ENCODE measurements at regions of chr7 and their contacts with region 1.

Region 1: DNA sequence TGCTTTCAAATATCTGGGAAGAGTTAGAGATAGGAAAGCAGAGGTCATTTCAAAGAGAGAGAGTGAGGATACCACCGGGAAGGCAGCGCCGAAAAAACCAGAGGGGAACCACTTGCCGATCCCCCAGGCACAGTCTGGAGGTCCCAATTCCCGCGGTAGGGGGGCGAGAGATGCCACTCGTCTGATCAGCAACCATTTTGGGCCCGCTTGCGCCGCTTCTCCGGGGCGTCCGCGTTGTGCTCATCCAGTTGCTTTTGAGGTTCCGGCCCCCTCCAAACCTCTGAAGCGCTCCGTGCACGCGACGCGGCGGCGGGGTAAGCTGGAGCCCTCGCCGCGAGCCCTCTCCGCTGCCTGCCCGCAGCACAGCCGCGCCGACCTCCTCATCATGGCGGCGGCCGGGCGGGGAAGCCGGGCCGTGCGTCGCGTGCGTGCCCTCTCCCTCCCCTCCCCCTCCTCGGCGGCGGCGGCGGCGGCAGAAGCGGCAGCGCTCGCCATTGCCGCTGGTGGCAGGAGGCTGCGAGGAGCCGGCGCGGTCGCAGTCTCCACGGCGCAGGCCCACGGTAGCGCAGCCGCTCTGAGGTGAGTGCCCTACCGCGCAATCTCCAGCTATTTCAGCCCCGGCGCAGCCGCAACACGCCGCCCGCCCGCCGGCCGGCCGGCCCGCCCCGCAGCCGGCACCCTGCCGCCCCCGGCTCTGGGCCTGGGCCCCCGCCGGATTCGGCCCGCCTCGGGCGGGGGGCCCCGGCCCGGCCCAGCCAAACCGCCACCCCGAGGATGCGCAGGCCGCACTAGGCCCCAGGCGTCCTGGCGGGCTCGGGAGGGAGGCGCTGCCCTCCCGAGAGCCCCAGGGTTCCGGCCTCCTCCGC is at the start of gene NRF1:
- DNase-seq: peak; percentile 98
- H3K4me3 ChIP-seq: peak within 1 kb of the TSS; percentile 79 to 95
- H3K27ac ChIP-seq: peak within 1 kb of the TSS; percentile 86 to 97
- H3K4me1 ChIP-seq: peaks cover 14 to 25% of the 10 kb centered on the region in 2 experiments
- H3K27me3 ChIP-seq: no peaks in the 10 kb centered on the region
- CTCF ChIP-seq: no peak
- EP300 ChIP-seq: peak in 1 of 2 experiments; percentile 92; a peak in 1 of 4 replicates
- RAD21 ChIP-seq: no peak
- polyA plus RNA-seq, gene NRF1: 10.9 and 16.9 TPM in 2 replicates

Region 2: DNA sequence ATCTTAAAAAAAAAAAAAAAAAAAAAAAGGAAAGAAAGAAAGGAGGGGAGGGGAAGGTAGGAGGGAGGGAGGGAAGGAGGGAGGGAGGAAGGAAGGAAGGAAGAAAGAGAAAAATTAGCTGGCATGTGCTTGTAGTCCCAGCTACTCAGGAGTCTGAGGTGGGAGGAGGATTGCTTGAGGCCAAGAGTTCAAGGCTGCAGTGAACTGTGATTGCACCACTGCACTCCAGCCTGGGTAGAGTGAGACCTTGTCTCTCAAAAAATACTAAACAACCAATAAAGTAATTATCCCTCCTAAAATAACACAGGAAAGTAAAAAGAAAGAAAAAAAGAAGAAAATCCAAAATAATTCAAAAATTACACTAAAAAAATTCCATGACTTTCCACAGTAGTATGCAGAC is 13.8 kb before region 1 on chr7:
- CTCF ChIA-PET with region 1: interaction called, 24 read pairs
- POLR2A ChIA-PET with region 1: no interaction called
- DNase-seq: no peak
- H3K4me3 ChIP-seq: no peak overlapping the region
- H3K27ac ChIP-seq: no peak overlapping the region
- H3K4me1 ChIP-seq: no peaks in the 10 kb centered on the region
- H3K27me3 ChIP-seq: no peaks in the 10 kb centered on the region
- CTCF ChIP-seq: no peak
- EP300 ChIP-seq: no peak
- RAD21 ChIP-seq: no peak

Region 3: DNA sequence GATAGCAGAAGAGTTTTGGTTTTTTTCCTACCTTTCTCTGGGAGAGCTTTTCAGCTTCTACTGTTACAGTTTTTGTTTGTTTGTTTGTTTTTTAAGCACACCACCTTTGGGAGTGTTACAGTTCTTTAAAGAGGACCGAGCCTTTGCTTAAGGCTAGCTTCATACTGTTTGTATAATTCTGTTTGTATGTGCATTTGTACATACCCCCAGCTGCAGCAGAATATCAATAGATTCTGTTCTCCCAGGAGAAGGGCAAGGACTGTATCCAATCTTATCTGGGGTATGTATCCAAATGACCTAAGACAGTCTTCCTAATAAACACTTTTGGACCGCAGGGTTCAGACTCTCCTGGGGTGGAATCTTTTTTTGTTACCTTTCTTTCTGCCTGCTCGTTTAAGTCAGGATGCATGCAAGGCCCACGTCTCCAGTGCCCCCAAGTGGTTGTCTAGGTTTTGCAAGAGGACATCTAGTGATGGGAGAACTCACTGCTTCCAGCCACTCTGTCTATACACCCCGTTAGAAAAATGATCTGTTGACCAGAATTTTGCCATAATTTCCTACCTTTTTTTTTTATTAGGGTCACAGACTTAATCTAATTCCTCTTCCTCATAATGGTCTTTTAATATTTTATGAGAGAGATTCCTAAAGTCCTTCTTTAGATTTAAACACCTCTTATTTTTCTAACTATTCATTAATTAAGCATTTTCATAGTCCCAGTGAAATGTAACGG is 24.0 kb after region 1 on chr7:
- CTCF ChIA-PET with region 1: interaction called, 214 read pairs
- POLR2A ChIA-PET with region 1: interaction called, 6 read pairs
- DNase-seq: peak; percentile 78
- H3K4me3 ChIP-seq: no peak overlapping the region
- H3K27ac ChIP-seq: no peak overlapping the region
- H3K4me1 ChIP-seq: no peaks in the 10 kb centered on the region
- H3K27me3 ChIP-seq: no peaks in the 10 kb centered on the region
- CTCF ChIP-seq: peak; percentile 98
- EP300 ChIP-seq: no peak
- RAD21 ChIP-seq: peak; percentile 90